Natural killer cell (primary cell): ENCODE measurements at regions of chr11 and their contacts with region 1.

Region 1: DNA sequence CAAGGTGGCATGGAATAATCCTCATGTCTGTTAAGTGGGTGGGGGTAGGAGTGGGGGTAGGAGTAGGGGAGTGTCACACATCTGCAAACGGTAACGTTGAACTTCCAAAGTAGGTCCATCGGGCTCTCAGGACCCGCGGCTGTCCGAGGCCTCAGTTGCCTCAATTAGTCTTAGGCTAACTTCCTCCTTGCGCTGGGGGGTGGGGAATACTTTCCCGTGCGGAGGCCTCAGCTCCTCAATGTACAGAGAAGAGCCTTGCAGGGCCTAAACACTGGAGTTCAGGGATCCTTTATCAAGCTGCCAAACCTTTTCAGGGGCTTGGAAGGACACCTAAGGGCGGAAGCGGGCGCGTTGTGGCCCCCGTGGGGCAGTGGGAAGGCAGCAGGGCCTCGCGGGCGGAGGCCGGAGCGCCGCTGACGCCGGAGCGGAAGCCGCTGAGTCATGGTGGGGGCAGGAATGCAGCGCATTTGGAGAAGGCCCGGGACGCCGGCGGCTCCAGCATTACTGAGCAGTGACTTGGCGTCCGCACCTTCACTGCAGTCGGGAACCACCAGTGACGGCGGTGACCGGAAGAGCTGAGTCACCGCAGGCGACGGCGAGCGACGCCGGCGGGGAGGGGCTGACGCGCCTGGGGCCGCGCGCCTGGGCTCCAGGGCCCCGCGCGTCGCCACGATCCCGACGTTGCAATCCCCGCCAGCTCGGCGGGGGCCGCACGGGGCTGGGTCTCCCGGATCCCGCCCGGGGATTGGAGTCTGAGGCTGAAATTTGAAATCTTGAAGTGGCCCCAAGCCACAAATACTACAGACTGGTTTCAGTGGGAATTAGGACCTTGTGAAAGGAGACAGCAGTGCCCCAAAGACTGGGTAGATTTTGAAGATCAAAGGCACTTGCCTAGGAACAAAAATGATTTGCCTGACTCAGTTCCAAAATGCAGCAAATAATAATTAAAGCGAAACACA is 20.2 kb upstream of the IPO7 start:
- DNase-seq: peak; percentile 83 to 89
- ATAC-seq: peak; percentile 91 to 96 (median 96)
- H3K4me3 ChIP-seq: peak overlapping the region; percentile 47
- H3K4me3 Mint-ChIP-seq: peak overlapping the region; percentile 86
- H3K27ac ChIP-seq: peak overlapping the region; percentile 89
- H3K27ac Mint-ChIP-seq: peak overlapping the region; percentile 90 to 94
- H3K4me1 ChIP-seq: peaks cover 13% of the 10 kb centered on the region
- H3K4me1 Mint-ChIP-seq: peaks cover 4 to 9% of the 10 kb centered on the region in 2 donors
- H3K27me3 ChIP-seq: no peaks in the 10 kb centered on the region
- H3K27me3 Mint-ChIP-seq: no peaks in the 10 kb centered on the region
- CTCF ChIP-seq: no peak

Region 2: GRCh38 chr11:8099291-8099899 is 1264.8 kb before region 1 on chr11:
- intact Hi-C with region 1: no loop called
- DNase-seq: peak; percentile 39 to 81
- ATAC-seq: peak in 1 of 3 donors; percentile 56
- H3K4me3 ChIP-seq: no peak overlapping the region
- H3K4me3 Mint-ChIP-seq: no peak overlapping the region
- H3K27ac ChIP-seq: no peak overlapping the region
- H3K27ac Mint-ChIP-seq: no peak overlapping the region
- H3K4me1 ChIP-seq: no peaks in the 10 kb centered on the region
- H3K4me1 Mint-ChIP-seq: no peaks in the 10 kb centered on the region
- H3K27me3 ChIP-seq: no peaks in the 10 kb centered on the region
- H3K27me3 Mint-ChIP-seq: no peaks in the 10 kb centered on the region
- CTCF ChIP-seq: peak; percentile 63

Region 3: GRCh38 chr11:9264316-9265210 is 99.7 kb before region 1 on chr11:
- intact Hi-C with region 1: loop called (anchors 1 kb)
- DNase-seq: peak; percentile 30 to 49
- ATAC-seq: peak; percentile 16 to 57 (median 27)
- H3K4me3 ChIP-seq: peak overlapping the region; percentile 85
- H3K4me3 Mint-ChIP-seq: peak overlapping the region; percentile 94
- H3K27ac ChIP-seq: peak overlapping the region; percentile 73
- H3K27ac Mint-ChIP-seq: peak overlapping the region; percentile 93 to 94
- H3K4me1 ChIP-seq: peaks cover 23% of the 10 kb centered on the region
- H3K4me1 Mint-ChIP-seq: peaks cover 22 to 33% of the 10 kb centered on the region in 2 donors
- H3K27me3 ChIP-seq: no peaks in the 10 kb centered on the region
- H3K27me3 Mint-ChIP-seq: peaks cover 0 to under 1% of the 10 kb centered on the region in 2 donors
- CTCF ChIP-seq: no peak

Region 4: DNA sequence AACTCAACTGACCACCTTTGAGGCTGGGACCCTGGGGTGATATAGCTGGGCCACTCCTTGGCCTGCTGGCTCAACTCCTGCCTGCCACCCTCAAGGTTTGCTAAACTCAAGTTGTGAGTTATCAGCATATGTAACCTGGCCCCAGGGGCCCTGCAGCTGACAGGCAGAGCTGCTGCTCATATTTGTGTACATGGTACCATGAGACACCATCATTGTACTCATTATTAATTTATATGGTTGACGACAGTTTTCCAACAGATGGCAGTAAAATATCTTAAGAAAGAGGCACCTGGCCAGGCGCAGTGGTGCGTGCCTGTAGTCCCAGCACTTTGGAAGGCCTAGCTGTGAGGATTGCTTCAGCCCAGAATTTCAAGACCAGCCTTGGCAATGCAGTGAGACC is 87.7 kb before region 1 on chr11:
- intact Hi-C with region 1: no loop called
- DNase-seq: no peak
- ATAC-seq: no peak
- H3K4me3 ChIP-seq: no peak overlapping the region
- H3K4me3 Mint-ChIP-seq: no peak overlapping the region
- H3K27ac ChIP-seq: no peak overlapping the region
- H3K27ac Mint-ChIP-seq: no peak overlapping the region
- H3K4me1 ChIP-seq: peaks cover 13% of the 10 kb centered on the region
- H3K4me1 Mint-ChIP-seq: peaks cover 9 to 14% of the 10 kb centered on the region in 2 donors
- H3K27me3 ChIP-seq: no peaks in the 10 kb centered on the region
- H3K27me3 Mint-ChIP-seq: peaks cover 0 to 7% of the 10 kb centered on the region in 2 donors
- CTCF ChIP-seq: no peak

Region 5: GRCh38 chr11:9347100-9347499 is 17.1 kb before region 1 on chr11:
- intact Hi-C with region 1: no loop called
- DNase-seq: peak in 1 of 2 donors; percentile 31
- ATAC-seq: peak in 1 of 3 donors; percentile 45
- H3K4me3 ChIP-seq: no peak overlapping the region
- H3K4me3 Mint-ChIP-seq: no peak overlapping the region
- H3K27ac ChIP-seq: no peak overlapping the region
- H3K27ac Mint-ChIP-seq: no peak overlapping the region
- H3K4me1 ChIP-seq: no peaks in the 10 kb centered on the region
- H3K4me1 Mint-ChIP-seq: peaks cover 13 to 18% of the 10 kb centered on the region in 2 donors
- H3K27me3 ChIP-seq: no peaks in the 10 kb centered on the region
- H3K27me3 Mint-ChIP-seq: peaks cover 16 to 21% of the 10 kb centered on the region in 2 donors
- CTCF ChIP-seq: no peak

Region 6: GRCh38 chr11:9384535-9385303 is 20.5 kb after region 1 on chr11 and contains the start of gene IPO7:
- intact Hi-C with region 1: loop called (anchors 1 kb)
- DNase-seq: peak; percentile 77 to 92
- ATAC-seq: peak; percentile 97 to 98 (median 97)
- H3K4me3 ChIP-seq: peak within 1 kb of the TSS; percentile 74
- H3K4me3 Mint-ChIP-seq: peak within 1 kb of the TSS; percentile 95
- H3K27ac ChIP-seq: peak within 1 kb of the TSS; percentile 68
- H3K27ac Mint-ChIP-seq: peak within 1 kb of the TSS; percentile 91 to 96
- H3K4me1 ChIP-seq: peaks cover 12% of the 10 kb centered on the region
- H3K4me1 Mint-ChIP-seq: peaks cover 33 to 35% of the 10 kb centered on the region in 2 donors
- H3K27me3 ChIP-seq: no peaks in the 10 kb centered on the region
- H3K27me3 Mint-ChIP-seq: no peaks in the 10 kb centered on the region
- CTCF ChIP-seq: no peak
- total RNA-seq, gene IPO7: 47.2 to 62.3 (median 58.0) TPM

Region 7: DNA sequence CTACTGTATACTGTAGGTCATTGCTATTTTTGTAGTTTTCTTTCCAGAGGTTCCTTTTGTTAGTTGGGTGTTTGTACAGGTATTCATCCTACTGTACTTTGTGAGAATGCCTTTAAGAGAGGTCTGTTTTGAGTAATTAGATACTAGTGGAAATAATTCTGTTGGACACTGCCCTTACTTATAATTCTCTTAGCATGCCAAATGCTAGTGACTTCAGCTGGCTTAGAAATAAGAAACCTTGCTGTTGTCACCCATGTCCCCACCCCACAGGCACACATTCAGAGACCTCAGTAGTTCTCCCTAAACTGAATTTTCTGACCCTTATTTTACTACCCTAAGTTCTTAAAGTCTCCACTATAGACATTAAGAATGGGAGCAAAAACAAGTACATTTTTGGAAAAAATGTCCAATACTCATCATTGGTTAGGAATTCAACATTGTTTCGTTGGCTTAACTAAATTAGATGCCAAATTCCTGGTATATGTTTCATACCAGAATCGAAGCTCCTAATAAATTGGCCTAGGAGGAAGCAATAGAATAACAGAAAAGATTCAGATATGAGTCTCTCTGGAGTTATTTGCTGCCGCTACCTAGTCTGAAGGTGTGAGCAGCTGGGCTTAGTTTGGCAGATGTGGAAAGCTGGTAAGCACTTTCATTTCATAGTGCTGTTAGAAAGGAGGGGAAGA is 125.0 kb after region 1 on chr11:
- intact Hi-C with region 1: no loop called
- DNase-seq: no peak
- ATAC-seq: no peak
- H3K4me3 ChIP-seq: no peak overlapping the region
- H3K4me3 Mint-ChIP-seq: no peak overlapping the region
- H3K27ac ChIP-seq: no peak overlapping the region
- H3K27ac Mint-ChIP-seq: no peak overlapping the region
- H3K4me1 ChIP-seq: no peaks in the 10 kb centered on the region
- H3K4me1 Mint-ChIP-seq: peaks cover 0 to 4% of the 10 kb centered on the region in 2 donors
- H3K27me3 ChIP-seq: no peaks in the 10 kb centered on the region
- H3K27me3 Mint-ChIP-seq: no peaks in the 10 kb centered on the region
- CTCF ChIP-seq: no peak